CD8-positive, alpha-beta T cell (primary cell): ENCODE measurements at regions of chr3 and their contacts with region 1.

Region 1: GRCh38 chr3:21779909-21780308 is 28.9 kb upstream of the ZNF385D start:
- DNase-seq: no peak
- ATAC-seq: no peak
- H3K4me3 ChIP-seq: no peak overlapping the region
- H3K4me3 Mint-ChIP-seq: no peak overlapping the region
- H3K27ac ChIP-seq: no peak overlapping the region
- H3K27ac Mint-ChIP-seq: no peak overlapping the region
- H3K4me1 ChIP-seq: no peaks in the 10 kb centered on the region
- H3K4me1 Mint-ChIP-seq: no peaks in the 10 kb centered on the region
- H3K27me3 ChIP-seq: no peaks in the 10 kb centered on the region
- H3K27me3 Mint-ChIP-seq: no peaks in the 10 kb centered on the region
- CTCF ChIP-seq: no peak

Region 2: GRCh38 chr3:21062831-21063294 is 717.0 kb before region 1 on chr3:
- CTCF ChIA-PET with region 1: no interaction called
- POLR2A ChIA-PET with region 1: no interaction called
- intact Hi-C with region 1: loop called in 1 of 2 experiments (anchors 10 kb)
- DNase-seq: no peak
- ATAC-seq: no peak
- H3K4me3 ChIP-seq: no peak overlapping the region
- H3K4me3 Mint-ChIP-seq: no peak overlapping the region
- H3K27ac ChIP-seq: no peak overlapping the region
- H3K27ac Mint-ChIP-seq: no peak overlapping the region
- H3K4me1 ChIP-seq: no peaks in the 10 kb centered on the region
- H3K4me1 Mint-ChIP-seq: no peaks in the 10 kb centered on the region
- H3K27me3 ChIP-seq: no peaks in the 10 kb centered on the region
- H3K27me3 Mint-ChIP-seq: no peaks in the 10 kb centered on the region
- CTCF ChIP-seq: no peak

Region 3: DNA sequence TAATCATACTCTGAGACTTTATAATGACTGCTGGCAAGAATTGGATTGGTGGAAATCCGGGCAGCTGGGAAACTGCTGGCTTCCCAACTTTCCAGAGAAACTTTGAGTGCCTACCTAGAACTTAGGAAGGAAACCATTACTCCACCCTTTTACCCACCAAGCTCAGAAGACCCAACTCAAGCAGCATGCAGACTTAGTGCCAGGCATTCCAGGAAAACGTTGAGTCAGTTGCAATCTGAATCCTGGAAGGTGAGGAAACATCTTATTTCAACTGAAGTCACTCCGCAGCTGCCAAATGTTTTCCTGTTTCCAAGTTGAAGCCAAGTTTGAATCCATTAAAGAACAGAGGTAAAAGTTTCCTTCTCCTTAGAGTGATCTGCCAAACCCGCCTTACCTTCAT is 155.4 kb before region 1 on chr3:
- CTCF ChIA-PET with region 1: no interaction called
- POLR2A ChIA-PET with region 1: no interaction called
- intact Hi-C with region 1: no loop called
- DNase-seq: no peak
- ATAC-seq: no peak
- H3K4me3 ChIP-seq: no peak overlapping the region
- H3K4me3 Mint-ChIP-seq: no peak overlapping the region
- H3K27ac ChIP-seq: no peak overlapping the region
- H3K27ac Mint-ChIP-seq: no peak overlapping the region
- H3K4me1 ChIP-seq: no peaks in the 10 kb centered on the region
- H3K4me1 Mint-ChIP-seq: no peaks in the 10 kb centered on the region
- H3K27me3 ChIP-seq: no peaks in the 10 kb centered on the region
- H3K27me3 Mint-ChIP-seq: no peaks in the 10 kb centered on the region
- CTCF ChIP-seq: no peak

Region 4: GRCh38 chr3:21734746-21735145 is 45.2 kb before region 1 on chr3:
- CTCF ChIA-PET with region 1: no interaction called
- POLR2A ChIA-PET with region 1: no interaction called
- intact Hi-C with region 1: no loop called
- DNase-seq: no peak
- ATAC-seq: no peak
- H3K4me3 ChIP-seq: no peak overlapping the region
- H3K4me3 Mint-ChIP-seq: no peak overlapping the region
- H3K27ac ChIP-seq: no peak overlapping the region
- H3K27ac Mint-ChIP-seq: no peak overlapping the region
- H3K4me1 ChIP-seq: no peaks in the 10 kb centered on the region
- H3K4me1 Mint-ChIP-seq: no peaks in the 10 kb centered on the region
- H3K27me3 ChIP-seq: no peaks in the 10 kb centered on the region
- H3K27me3 Mint-ChIP-seq: no peaks in the 10 kb centered on the region
- CTCF ChIP-seq: no peak